A673 (cell line): ENCODE measurements at regions of chr6 and their contacts with region 1.

Region 1: GRCh38 chr6:79466207-79466834 is 70.9 kb downstream of the LCA5 start:
- DNase-seq: peak; percentile 36
- H3K4me3 ChIP-seq: no peak overlapping the region
- H3K27ac ChIP-seq: no peak overlapping the region
- H3K4me1 ChIP-seq: peaks cover 4% of the 10 kb centered on the region
- H3K27me3 ChIP-seq: no peaks in the 10 kb centered on the region
- CTCF ChIP-seq: peak; percentile 59

Region 2: GRCh38 chr6:78844899-78845298 is 621.4 kb before region 1 on chr6:
- CTCF ChIA-PET with region 1: no interaction called
- POLR2A ChIA-PET with region 1: no interaction called
- intact Hi-C with region 1: loop called (anchors 10 kb)
- DNase-seq: no peak
- H3K4me3 ChIP-seq: no peak overlapping the region
- H3K27ac ChIP-seq: no peak overlapping the region
- H3K4me1 ChIP-seq: no peaks in the 10 kb centered on the region
- H3K27me3 ChIP-seq: no peaks in the 10 kb centered on the region
- CTCF ChIP-seq: no peak

Region 3: GRCh38 chr6:79040083-79040482 is 426.2 kb before region 1 on chr6:
- CTCF ChIA-PET with region 1: no interaction called
- POLR2A ChIA-PET with region 1: no interaction called
- intact Hi-C with region 1: no loop called
- DNase-seq: peak; percentile 4
- H3K4me3 ChIP-seq: no peak overlapping the region
- H3K27ac ChIP-seq: no peak overlapping the region
- H3K4me1 ChIP-seq: no peaks in the 10 kb centered on the region
- H3K27me3 ChIP-seq: no peaks in the 10 kb centered on the region
- CTCF ChIP-seq: no peak

Region 4: GRCh38 chr6:79117752-79118151 is 348.6 kb before region 1 on chr6:
- CTCF ChIA-PET with region 1: no interaction called
- POLR2A ChIA-PET with region 1: no interaction called
- intact Hi-C with region 1: no loop called
- DNase-seq: no peak
- H3K4me3 ChIP-seq: no peak overlapping the region
- H3K27ac ChIP-seq: no peak overlapping the region
- H3K4me1 ChIP-seq: no peaks in the 10 kb centered on the region
- H3K27me3 ChIP-seq: no peaks in the 10 kb centered on the region
- CTCF ChIP-seq: no peak

Region 5: GRCh38 chr6:79338493-79338892 is 127.8 kb before region 1 on chr6:
- CTCF ChIA-PET with region 1: no interaction called
- POLR2A ChIA-PET with region 1: no interaction called
- intact Hi-C with region 1: no loop called
- DNase-seq: no peak
- H3K4me3 ChIP-seq: no peak overlapping the region
- H3K27ac ChIP-seq: no peak overlapping the region
- H3K4me1 ChIP-seq: no peaks in the 10 kb centered on the region
- H3K27me3 ChIP-seq: no peaks in the 10 kb centered on the region
- CTCF ChIP-seq: no peak